Psoas muscle (tissue), 8 donors: ENCODE measurements at regions of chr2 and their contacts with region 1.

Region 1: GRCh38 chr2:119476301-119477021 is 44.8 kb downstream of the TMEM37 start:
- DNase-seq: peak; percentile 55 to 76
- ATAC-seq: peak; percentile 87 to 94 (median 90)
- H3K4me3 ChIP-seq: no peak overlapping the region
- H3K27ac ChIP-seq: no peak overlapping the region
- H3K4me1 ChIP-seq: peaks cover 8% of the 10 kb centered on the region
- H3K27me3 ChIP-seq: no peaks in the 10 kb centered on the region
- CTCF ChIP-seq: peak; percentile 95

Region 2: GRCh38 chr2:119326938-119327337 is 149.5 kb before region 1 on chr2:
- intact Hi-C with region 1: loop called in 1 of 2 experiments (anchors 10 kb)
- DNase-seq: no peak
- ATAC-seq: no peak
- H3K4me3 ChIP-seq: no peak overlapping the region
- H3K27ac ChIP-seq: no peak overlapping the region
- H3K4me1 ChIP-seq: no peaks in the 10 kb centered on the region
- H3K27me3 ChIP-seq: no peaks in the 10 kb centered on the region
- CTCF ChIP-seq: no peak